Activated naive CD4-positive, alpha-beta T cell treated with anti-CD3 and anti-CD28 coated beads, Interleukin-2, amount 10 ng/mL, durations not matched to agents 7 days and 5 days (primary cell): ENCODE measurements at regions of chr1 and their contacts with region 1.

Region 1: GRCh38 chr1:9629445-9630201 is 21.9 kb upstream of the PIK3CD start:
- DNase-seq: peak; percentile 90
- H3K4me3 Mint-ChIP-seq: peak overlapping the region; percentile 87
- H3K27ac Mint-ChIP-seq: peak overlapping the region; percentile 93
- H3K4me1 Mint-ChIP-seq: peaks cover 74% of the 10 kb centered on the region
- H3K27me3 Mint-ChIP-seq: peaks cover 11% of the 10 kb centered on the region

Region 2: GRCh38 chr1:9615316-9616063 is 14.1 kb before region 1 on chr1:
- CTCF ChIA-PET with region 1: interaction called, 17 read pairs
- DNase-seq: peak; percentile 79
- H3K4me3 Mint-ChIP-seq: no peak overlapping the region
- H3K27ac Mint-ChIP-seq: no peak overlapping the region
- H3K4me1 Mint-ChIP-seq: no peaks in the 10 kb centered on the region
- H3K27me3 Mint-ChIP-seq: peaks cover 17% of the 10 kb centered on the region

Region 3: DNA sequence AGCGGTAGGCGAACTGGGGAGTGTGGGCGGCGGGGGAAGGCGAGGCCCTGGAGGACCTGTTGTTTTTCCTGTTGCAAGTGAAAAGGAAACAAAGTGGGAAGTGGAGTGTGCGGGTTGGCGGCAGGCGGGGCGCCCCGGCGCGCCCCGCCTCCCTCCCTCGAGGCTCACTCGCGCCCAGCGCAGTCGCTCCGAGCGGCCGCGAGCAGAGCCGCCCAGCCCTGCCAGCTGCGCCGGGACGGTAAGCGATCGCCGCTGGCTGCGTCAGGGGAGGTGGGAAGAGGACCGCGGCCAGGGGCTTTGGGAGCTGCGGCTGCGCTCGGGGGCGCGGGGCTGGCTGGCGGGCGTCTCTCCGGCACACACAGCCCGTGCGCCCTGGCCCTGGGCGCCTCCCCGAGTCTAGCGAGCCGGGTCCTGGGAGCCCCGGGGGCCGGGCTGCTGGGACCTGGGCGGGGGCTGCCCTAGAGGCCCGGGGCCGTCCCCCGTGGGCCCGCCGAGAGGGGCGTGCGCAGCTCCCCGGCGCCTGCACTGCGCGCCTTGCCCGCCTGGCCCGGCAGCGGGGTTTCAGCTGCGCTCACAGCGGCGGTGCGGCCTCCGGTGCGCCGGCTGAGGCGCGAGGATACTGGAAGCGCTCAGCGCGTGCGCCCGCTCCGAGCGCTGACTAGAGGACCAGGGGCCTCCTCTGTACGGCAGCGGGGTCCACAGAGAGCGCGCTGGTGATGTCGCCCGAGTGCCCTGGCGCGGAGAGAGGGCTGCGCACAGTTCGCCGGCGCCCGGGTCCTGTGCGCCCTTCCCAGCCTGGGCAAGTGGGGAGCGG is 22.1 kb after region 1 on chr1 and contains the start of gene PIK3CD:
- CTCF ChIA-PET with region 1: interaction called, 87 read pairs
- DNase-seq: peak; percentile 69
- H3K4me3 Mint-ChIP-seq: peak within 1 kb of the TSS; percentile 98
- H3K27ac Mint-ChIP-seq: peak within 1 kb of the TSS; percentile 99
- H3K4me1 Mint-ChIP-seq: peaks cover 63% of the 10 kb centered on the region
- H3K27me3 Mint-ChIP-seq: peaks cover 4% of the 10 kb centered on the region

Region 4: DNA sequence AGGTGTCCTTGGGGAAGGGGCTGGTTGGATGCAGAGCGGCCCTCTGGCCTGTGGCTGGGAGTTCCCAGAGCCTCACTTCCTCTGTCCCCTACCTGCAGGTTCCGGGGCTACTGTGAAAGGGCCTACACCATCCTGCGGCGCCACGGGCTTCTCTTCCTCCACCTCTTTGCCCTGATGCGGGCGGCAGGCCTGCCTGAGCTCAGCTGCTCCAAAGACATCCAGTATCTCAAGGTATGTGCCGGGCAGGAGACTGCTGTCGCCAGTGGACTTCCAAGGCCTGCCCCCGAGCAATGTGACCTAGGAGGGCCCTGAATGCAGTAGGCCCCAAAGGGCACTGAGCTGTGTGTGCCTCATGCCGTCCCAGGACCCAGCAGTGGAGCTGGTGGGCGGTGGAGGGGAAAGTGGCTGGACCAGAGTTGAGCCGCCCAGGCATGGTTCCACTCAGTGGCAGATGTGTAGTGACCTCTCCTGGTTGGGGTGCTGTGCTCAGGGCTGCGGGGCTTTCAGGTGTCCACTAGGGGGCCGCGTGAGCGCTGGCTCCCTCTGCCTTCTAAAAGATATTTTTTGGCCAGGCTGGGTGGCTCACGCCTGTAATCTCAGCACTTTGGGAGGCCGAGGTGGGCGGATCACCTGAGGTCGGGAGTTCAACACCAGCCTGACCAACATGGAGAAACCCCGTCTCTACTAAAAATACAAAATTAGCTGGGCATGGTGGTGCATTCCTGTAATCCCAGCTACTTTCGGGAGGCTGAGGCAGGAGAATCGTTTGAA is 95.3 kb after region 1 on chr1:
- CTCF ChIA-PET with region 1: interaction called, 37 read pairs
- DNase-seq: peak; percentile 76
- H3K4me3 Mint-ChIP-seq: no peak overlapping the region
- H3K27ac Mint-ChIP-seq: peak overlapping the region; percentile 75
- H3K4me1 Mint-ChIP-seq: peaks cover 82% of the 10 kb centered on the region
- H3K27me3 Mint-ChIP-seq: no peaks in the 10 kb centered on the region

Region 5: DNA sequence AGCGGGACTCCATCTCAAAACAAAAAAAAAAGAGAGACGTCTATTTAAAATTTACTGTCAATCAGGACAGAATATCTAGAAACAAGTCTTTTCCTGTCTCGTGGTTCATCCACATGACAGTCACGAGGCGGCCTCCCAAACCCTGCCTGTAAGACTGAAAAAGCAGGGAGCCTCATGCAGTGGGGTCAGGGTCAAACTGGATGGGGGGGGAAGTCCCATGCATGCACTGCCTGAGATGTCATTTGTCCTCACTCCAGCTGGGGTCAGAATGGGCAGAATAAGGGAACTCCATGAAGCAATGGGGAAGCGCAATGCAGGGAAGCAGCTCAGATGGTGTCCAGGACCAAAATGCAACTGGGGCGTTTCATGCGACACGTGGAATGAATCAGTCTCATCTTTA is 107.4 kb after region 1 on chr1:
- CTCF ChIA-PET with region 1: no interaction called
- DNase-seq: no peak
- H3K4me3 Mint-ChIP-seq: no peak overlapping the region
- H3K27ac Mint-ChIP-seq: no peak overlapping the region
- H3K4me1 Mint-ChIP-seq: peaks cover 34% of the 10 kb centered on the region
- H3K27me3 Mint-ChIP-seq: peaks cover 4% of the 10 kb centered on the region

Region 6: DNA sequence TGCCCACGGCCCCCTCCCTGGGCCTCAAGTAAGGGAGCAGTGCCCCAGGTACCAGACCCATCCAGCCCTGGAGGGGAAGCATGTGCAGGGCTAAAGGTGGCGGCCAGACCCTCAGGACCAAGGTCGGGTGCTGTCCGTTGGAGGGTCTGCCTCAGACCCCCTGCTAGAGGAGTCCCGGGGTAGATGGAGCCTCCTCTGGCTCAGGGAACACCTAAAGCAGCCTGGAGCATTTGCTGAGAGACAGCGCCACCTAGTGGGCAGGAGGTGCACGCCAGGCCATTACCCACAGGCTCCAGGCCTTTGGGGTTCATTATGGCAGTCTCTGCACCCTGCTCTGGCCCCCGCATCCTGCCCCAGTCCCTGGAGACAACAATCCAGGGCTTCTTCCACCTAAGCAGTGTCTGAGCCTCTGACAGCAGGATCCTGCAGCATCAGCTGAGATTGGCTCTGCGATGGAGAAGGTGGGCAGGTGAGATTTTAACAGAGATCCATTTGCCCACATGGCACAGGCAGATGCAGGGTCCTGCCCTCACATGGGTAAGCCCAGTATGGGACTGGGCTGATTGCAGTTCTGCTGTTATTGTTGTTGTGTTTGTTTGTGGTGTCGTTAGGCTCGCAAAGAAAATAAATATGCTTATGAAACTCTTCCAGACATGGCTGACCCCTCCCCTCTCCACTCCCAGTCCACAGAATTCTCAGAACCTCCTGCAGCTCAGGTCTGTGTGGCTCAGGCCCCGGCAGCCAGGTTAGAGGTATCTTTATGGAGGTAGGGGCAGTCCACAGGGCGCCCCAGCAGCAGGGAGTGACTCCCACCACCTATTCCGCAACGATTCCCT is 238.0 kb after region 1 on chr1:
- CTCF ChIA-PET with region 1: interaction called, 12 read pairs
- DNase-seq: peak; percentile 92
- H3K4me3 Mint-ChIP-seq: no peak overlapping the region
- H3K27ac Mint-ChIP-seq: no peak overlapping the region
- H3K4me1 Mint-ChIP-seq: peaks cover 12% of the 10 kb centered on the region
- H3K27me3 Mint-ChIP-seq: peaks cover under 1% of the 10 kb centered on the region